Posterior vena cava (tissue), 2 donors: ENCODE measurements at regions of chr2 and their contacts with region 1.

Region 1: DNA sequence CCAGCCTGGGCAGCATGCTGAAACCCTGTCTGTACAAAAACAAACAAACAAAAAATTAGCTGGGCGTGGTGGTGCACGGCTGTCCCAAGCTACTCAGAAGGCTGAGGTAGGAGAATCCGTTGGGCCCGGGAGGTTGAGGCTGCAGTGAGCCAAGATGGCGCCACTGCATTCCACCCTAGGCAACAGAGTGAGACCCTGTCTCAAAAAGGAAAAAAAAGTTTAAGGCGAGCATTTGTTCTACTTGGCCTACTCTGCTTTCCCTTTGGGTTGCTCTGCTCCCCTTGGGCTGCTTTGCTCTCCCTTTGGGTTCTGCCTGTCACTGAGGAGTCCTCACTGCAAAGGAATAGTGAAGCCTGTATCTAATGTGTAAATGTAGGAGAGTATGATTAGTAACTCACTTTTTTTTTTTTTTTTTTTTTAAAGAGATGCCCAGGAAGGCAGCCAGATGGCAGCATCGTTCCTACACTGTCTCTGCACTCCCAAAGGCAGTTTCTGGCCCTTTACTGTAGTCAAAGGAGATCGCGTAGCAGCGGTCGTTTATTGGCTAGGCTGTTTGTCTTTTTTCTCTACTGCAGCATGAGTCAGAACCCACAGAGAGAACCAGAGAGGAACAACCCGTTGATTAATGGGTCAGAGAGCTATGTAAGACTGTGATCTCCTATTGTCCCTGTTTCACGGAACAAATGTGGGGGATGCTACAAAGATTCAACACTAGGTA is 118.3 kb upstream of the CWC22 start:
- DNase-seq: peak; percentile 81

Region 2: GRCh38 chr2:180143633-180144337 is 18.4 kb after region 1 on chr2:
- intact Hi-C with region 1: no loop called
- DNase-seq: no peak

Region 3: DNA sequence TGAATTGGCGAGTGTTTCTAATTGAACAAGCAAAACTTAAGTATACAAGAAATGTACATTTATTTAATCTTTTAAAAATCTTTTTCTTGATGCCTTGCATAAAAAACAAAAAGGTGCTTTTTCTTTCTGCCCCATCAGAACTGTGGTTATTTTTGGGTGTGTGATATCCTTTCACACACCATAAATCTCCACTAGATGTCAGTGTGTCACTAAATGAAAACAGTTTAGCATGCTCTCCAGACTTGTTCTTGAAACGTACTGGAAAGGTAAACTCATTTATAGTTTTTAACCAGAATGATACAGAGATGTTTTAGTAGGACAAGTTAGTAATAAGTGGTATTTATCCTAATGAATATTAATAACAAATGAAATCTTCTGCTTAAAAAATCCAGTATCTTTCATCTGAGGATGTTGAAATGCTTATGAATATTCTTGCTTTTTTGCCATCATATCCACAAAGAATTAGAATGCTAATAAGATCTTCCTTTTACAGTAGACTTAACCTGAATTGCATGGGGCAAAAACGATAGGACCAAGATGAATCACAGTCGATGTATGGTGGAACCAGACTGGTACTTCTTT is 951.8 kb after region 1 on chr2:
- intact Hi-C with region 1: loop called in 1 of 2 experiments (anchors 10 kb)
- DNase-seq: no peak

Region 4: DNA sequence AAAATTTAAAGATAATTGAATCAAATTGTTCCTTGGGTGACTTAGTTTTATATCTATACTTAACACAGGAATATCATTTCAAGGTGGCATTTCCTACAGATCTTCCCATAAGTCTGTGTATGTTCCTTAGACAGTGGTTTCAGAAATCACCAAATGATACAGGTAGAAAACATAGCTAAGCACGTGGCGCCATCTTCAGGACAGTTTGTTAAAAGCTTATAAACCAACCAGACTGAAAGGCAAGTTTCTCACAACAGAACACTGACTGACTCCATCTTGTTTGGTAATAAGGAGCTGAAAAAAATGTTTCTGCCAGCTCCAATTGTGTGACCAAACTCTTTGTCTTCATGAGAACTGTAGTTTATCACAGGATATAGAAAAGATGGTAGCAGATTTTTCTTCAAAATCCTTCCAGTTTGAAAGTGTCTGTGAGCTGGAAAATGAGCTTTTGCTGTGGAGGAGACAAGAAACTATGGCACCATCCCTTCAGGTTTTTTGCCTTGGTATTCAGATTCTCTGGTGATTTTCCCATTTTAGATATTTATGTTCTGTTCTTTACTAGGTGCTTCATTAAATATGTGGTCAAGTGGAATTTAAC is 1589.7 kb after region 1 on chr2:
- intact Hi-C with region 1: loop called in 1 of 2 experiments (anchors 5 kb)
- DNase-seq: no peak